Gastrocnemius medialis (tissue), 4 donors: ENCODE measurements at regions of chr13 and their contacts with region 1.

Region 1: GRCh38 chr13:76812206-76812897 is 73.9 kb downstream of the KCTD12 start:
- DNase-seq: peak; percentile 23 to 58
- ATAC-seq: peak; percentile 42 to 70
- H3K4me3 ChIP-seq: no peak overlapping the region
- H3K27ac ChIP-seq: peak overlapping the region in 2 of 4 donors; percentile 36 to 42
- H3K4me1 ChIP-seq: peaks cover 0 to 17% of the 10 kb centered on the region in 2 donors
- H3K27me3 ChIP-seq: no peaks in the 10 kb centered on the region
- CTCF ChIP-seq: no peak
- POLR2A ChIP-seq: no peak

Region 2: DNA sequence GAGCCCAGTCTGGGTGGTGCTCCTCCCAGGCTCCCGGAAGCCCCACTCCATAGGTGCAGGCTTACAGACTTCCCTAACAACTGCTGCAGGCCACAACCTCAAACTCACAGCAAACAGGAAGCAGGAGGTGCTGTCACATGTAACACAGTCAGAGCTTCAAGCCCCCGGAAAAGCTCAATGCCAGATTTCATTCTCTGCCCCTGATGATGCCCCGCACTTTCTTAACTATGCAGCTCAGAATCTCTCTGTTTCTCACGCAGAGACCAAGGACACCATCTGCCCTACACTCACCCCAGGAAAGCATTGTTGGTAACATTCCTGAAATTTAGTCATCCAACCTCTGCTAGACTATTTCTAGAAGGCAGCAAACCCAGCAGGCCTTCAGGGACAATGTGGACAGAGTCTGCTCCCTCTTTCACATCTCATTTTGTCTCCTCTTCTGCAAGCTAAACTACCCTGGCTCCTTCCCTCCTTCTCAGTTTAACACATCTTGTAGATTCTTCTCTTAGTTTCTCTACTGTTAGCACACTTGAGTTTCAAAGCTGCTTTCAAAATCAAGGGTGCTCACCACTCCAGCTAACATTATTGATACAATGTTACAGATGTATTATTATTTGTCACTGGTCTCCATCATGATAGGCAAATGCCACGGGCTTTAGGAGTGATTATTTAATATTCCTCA is 88.7 kb before region 1 on chr13:
- in situ Hi-C with region 1: no loop called
- intact Hi-C with region 1: loop called (anchors 10 kb)
- DNase-seq: peak in 1 of 2 donors; percentile 17
- ATAC-seq: peak; percentile 47 to 64
- H3K4me3 ChIP-seq: no peak overlapping the region
- H3K27ac ChIP-seq: peak overlapping the region in 3 of 4 donors; percentile 3 to 49 (median 39)
- H3K4me1 ChIP-seq: peaks cover 6 to 21% of the 10 kb centered on the region in 2 donors
- H3K27me3 ChIP-seq: no peaks in the 10 kb centered on the region
- CTCF ChIP-seq: no peak
- POLR2A ChIP-seq: no peak